ENCODE measurements at regions of chr4 and their contacts with region 1.

Region 1: GRCh38 chr4:70801265-70801809 is 38.4 kb downstream of the GRSF1 start:
- DNase-seq: peak; percentile 51
- H3K4me3 Mint-ChIP-seq: no peak overlapping the region
- H3K27ac Mint-ChIP-seq: no peak overlapping the region
- H3K4me1 Mint-ChIP-seq: peaks cover 21% of the 10 kb centered on the region
- H3K27me3 Mint-ChIP-seq: no peaks in the 10 kb centered on the region

Region 2: GRCh38 chr4:70251945-70252277 is 549.4 kb before region 1 on chr4:
- CTCF ChIA-PET with region 1: no interaction called
- intact Hi-C with region 1: no loop called
- DNase-seq: no peak
- H3K4me3 Mint-ChIP-seq: no peak overlapping the region
- H3K27ac Mint-ChIP-seq: no peak overlapping the region
- H3K4me1 Mint-ChIP-seq: no peaks in the 10 kb centered on the region
- H3K27me3 Mint-ChIP-seq: no peaks in the 10 kb centered on the region

Region 3: DNA sequence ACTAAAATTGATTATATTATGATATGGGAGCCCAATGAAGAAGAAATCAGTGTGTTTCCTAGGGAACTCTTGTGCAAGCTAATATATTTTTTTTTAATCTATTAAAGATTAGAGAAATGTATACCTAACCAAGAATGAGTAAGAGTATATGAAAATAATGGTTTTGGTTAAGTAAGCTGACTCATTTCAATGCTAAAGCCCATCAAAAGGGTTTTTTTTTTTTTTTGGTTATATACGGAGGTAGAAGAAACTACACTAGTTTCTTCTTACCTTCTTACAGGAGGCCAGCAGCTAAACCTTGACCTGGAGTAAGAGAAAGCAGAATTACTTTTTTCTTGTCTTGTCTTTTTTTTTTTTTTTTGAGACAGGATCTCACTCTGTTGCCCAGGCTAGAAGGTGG is 52.0 kb before region 1 on chr4:
- CTCF ChIA-PET with region 1: no interaction called
- intact Hi-C with region 1: loop called (anchors 2 kb)
- DNase-seq: no peak
- H3K4me3 Mint-ChIP-seq: no peak overlapping the region
- H3K27ac Mint-ChIP-seq: no peak overlapping the region
- H3K4me1 Mint-ChIP-seq: peaks cover 16% of the 10 kb centered on the region
- H3K27me3 Mint-ChIP-seq: no peaks in the 10 kb centered on the region

Region 4: DNA sequence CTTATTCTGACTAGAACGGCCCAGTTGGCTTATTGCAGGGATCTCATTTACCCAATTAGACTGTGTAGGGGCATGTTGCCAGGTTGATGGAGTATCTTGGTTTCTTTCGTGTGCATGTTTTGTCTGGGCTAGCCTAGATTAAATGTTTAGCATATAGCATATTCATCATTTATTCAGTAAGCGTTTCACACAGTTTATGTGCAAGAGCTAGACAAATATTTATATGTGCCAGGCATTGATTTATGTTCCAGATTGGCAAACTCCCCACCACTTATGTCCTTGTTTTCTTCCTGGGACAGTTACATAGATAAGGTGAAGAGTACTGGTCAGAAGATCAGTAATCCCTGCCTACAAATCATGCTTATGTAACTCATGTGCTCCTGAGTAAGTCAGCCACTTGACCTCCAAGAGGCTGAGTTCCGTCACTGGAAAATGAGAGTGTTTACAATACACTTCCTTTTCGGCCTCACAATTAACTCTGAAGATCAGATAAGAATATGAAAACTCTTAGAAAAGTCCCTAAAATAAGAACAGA is 22.4 kb before region 1 on chr4:
- CTCF ChIA-PET with region 1: no interaction called
- intact Hi-C with region 1: no loop called
- DNase-seq: no peak
- H3K4me3 Mint-ChIP-seq: no peak overlapping the region
- H3K27ac Mint-ChIP-seq: no peak overlapping the region
- H3K4me1 Mint-ChIP-seq: no peaks in the 10 kb centered on the region
- H3K27me3 Mint-ChIP-seq: no peaks in the 10 kb centered on the region